Dorsolateral prefrontal cortex (tissue), 120 donors: ENCODE measurements at regions of chr5 and their contacts with region 1.

Region 1: GRCh38 chr5:78964887-78965286 is 20.2 kb downstream of the ARSB start:
- DNase-seq: peak in 1 of 10 donors; percentile 19
- H3K4me3 ChIP-seq: no peak overlapping the region
- H3K27ac ChIP-seq: no peak overlapping the region
- H3K27me3 ChIP-seq: no peaks in the 10 kb centered on the region
- CTCF ChIP-seq: peak; percentile 8 to 86 (median 69)

Region 2: DNA sequence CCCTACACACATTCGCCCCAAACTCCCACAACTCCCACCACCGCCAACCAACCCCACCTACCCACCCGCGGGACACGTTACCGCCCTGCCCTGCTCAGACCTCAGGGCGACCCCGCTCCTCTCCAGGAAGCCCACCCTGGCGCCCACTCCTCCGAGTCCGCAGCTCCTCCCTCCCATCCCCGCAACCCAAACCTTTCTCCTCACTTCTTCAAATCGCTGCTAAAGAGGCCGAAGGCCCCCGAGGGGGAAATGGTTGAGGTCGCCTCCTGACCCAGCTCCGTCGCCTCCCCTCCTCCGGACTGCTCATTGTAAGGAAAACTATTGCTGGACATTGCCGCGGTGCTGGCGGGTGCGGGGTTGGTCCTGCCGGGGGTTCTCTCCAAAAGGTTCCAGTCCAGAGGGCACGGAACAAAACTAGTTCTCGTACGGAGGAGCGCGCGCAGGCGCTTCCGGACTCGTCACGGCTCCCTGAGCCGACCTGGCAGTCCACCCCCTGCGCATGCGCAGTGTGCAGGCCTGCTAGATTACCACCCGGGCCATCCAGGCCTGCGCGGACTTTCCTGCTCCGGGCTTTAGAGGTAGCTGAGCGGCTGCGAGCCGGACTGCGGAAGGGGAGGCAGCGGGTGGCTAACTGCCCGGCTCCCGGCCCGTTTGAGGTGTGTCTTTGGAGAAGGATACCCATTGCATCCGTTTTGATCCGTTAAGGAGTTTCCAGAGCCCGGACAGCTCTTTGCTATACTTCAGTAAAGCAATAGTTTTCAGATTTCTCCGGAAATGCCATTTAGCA is 670.4 kb before region 1 on chr5 and contains the start of gene AP3B1:
- intact Hi-C with region 1: loop called in 1 of 2 experiments (anchors 10 kb)
- DNase-seq: peak; percentile 94 to 98 (median 97)
- H3K4me3 ChIP-seq: peak within 1 kb of the TSS; percentile 70 to 99 (median 92)
- H3K27ac ChIP-seq: peak within 1 kb of the TSS; percentile 71 to 96 (median 88)
- H3K27me3 ChIP-seq: no peaks in the 10 kb centered on the region
- CTCF ChIP-seq: peak in 35 of 56 donors; percentile 8 to 57 (median 33)
- total RNA-seq, gene AP3B1: 17.0 to 42.8 (median 27.9) TPM

Region 3: GRCh38 chr5:78467752-78468357 is 497.0 kb before region 1 on chr5:
- intact Hi-C with region 1: loop called in 1 of 2 experiments (anchors 10 kb)
- DNase-seq: no peak
- H3K4me3 ChIP-seq: no peak overlapping the region
- H3K27ac ChIP-seq: no peak overlapping the region
- H3K27me3 ChIP-seq: no peaks in the 10 kb centered on the region
- CTCF ChIP-seq: peak; percentile 43 to 85 (median 77)

Region 4: GRCh38 chr5:78547731-78548615 is 416.9 kb before region 1 on chr5:
- intact Hi-C with region 1: loop called in 1 of 2 experiments (anchors 10 kb)
- DNase-seq: no peak
- H3K4me3 ChIP-seq: peak overlapping the region in 2 of 59 donors; percentile 10 to 27
- H3K27ac ChIP-seq: peak overlapping the region in 57 of 59 donors; percentile 25 to 86 (median 70)
- H3K27me3 ChIP-seq: no peaks in the 10 kb centered on the region
- CTCF ChIP-seq: no peak

Region 5: DNA sequence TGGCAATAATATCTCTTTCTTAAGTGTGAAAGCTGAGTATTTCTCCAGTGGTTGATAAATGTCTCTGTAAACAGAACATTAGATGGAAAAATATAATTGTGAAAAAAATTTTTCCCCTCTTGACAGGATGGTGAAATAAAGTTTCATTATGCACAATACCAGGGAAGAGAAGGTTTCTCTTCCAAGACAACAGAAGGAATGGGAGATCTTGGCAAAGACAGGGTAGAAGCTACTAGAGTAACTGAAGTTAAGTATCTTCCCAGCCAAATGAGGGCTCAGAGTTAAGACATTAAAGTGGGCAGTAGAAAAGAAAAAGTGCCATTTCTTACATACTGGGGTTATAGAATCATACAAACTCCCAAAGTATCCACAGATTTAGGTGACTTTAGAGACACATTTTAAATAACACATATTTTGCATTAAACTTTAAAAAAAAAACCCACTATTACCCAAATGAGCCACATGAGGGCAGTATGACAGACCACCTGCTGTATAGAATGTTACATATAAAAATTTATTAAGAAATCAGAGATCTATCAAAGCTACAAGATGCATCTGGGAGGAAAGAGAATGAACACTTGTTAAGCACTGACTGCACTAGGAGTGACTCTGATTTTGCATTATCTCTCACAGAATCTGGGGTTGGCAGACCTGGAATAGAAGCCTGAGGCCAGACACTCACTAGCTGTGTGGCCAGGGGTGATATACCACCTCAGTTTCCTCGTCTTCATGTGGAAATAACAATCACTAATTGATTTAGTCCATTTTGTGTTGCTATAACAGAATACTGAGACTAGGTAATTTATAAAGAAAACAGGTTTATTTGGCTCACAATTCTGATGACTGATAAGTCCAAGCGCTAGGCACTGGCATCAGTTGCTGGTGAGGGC is 78.3 kb before region 1 on chr5:
- intact Hi-C with region 1: loop called in 1 of 2 experiments (anchors 5 kb)
- DNase-seq: no peak
- H3K4me3 ChIP-seq: no peak overlapping the region
- H3K27ac ChIP-seq: no peak overlapping the region
- H3K27me3 ChIP-seq: no peaks in the 10 kb centered on the region
- CTCF ChIP-seq: peak; percentile 39 to 78 (median 64)